Activated CD4-positive, alpha-beta T cell treated with anti-CD3 and anti-CD28 coated beads, Interleukin-2, amount 10 ng/mL, durations not matched to agents 24 days and 14 days (primary cell): ENCODE measurements at regions of chr1 and their contacts with region 1.

Region 1: GRCh38 chr1:207499573-207499972 is 3.6 kb downstream of the CR1 start:
- DNase-seq: peak; percentile 87
- H3K4me3 Mint-ChIP-seq: no peak overlapping the region
- H3K27ac Mint-ChIP-seq: peak overlapping the region; percentile 39
- H3K4me1 Mint-ChIP-seq: peaks cover 13% of the 10 kb centered on the region
- H3K27me3 Mint-ChIP-seq: peaks cover 52% of the 10 kb centered on the region

Region 2: DNA sequence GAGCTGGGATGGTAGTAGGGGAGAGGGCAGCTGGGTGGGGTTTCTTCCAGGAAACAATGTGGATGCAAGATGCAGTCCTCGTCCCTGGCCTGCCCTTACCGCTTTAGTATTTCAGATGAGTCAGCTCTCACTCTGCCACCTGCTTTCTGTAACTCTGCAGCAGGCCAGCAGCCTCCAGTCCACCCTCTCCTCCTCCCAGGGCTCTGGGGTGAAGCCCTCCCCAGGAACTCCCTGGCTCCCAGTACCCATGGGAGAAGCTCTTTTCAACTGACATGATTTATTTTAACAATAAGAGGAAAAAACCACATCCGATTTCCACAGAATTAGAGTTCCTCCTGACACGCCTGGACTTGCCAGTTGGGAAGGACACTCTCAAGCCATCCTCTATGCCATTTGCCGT is 673.2 kb before region 1 on chr1:
- intact Hi-C with region 1: no loop called
- DNase-seq: no peak
- H3K4me3 Mint-ChIP-seq: no peak overlapping the region
- H3K27ac Mint-ChIP-seq: no peak overlapping the region
- H3K4me1 Mint-ChIP-seq: peaks cover 34% of the 10 kb centered on the region
- H3K27me3 Mint-ChIP-seq: peaks cover 1% of the 10 kb centered on the region

Region 3: DNA sequence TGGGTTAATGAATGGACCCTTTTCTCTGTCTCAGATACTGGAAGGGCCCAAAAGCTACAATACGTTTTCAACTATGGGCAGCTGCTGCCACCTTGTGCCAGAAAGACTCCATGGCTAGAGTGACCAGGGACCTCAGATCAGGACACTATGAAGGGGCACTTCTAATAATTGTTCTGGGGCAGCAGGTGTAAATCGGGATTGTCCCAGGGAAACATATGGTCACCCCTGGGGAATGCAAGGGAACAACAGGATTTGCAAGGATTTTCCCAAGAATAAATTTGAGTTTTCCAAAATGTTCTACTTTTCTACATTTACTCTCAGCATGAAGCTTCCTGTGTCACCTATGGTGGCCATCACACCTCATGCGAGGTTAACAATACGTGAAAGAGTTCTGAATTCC is 517.4 kb before region 1 on chr1:
- intact Hi-C with region 1: loop called (anchors 5 kb)
- DNase-seq: peak; percentile 90
- H3K4me3 Mint-ChIP-seq: no peak overlapping the region
- H3K27ac Mint-ChIP-seq: no peak overlapping the region
- H3K4me1 Mint-ChIP-seq: no peaks in the 10 kb centered on the region
- H3K27me3 Mint-ChIP-seq: peaks cover 52% of the 10 kb centered on the region

Region 4: GRCh38 chr1:207084701-207085180 is 414.8 kb before region 1 on chr1:
- intact Hi-C with region 1: loop called (anchors 1 kb)
- DNase-seq: peak; percentile 89
- H3K4me3 Mint-ChIP-seq: no peak overlapping the region
- H3K27ac Mint-ChIP-seq: no peak overlapping the region
- H3K4me1 Mint-ChIP-seq: peaks cover 30% of the 10 kb centered on the region
- H3K27me3 Mint-ChIP-seq: peaks cover 24% of the 10 kb centered on the region

Region 5: GRCh38 chr1:207321079-207321789 is 178.3 kb before region 1 on chr1 and contains the start of gene CD55:
- intact Hi-C with region 1: loop called (anchors 1 kb)
- DNase-seq: peak; percentile 100
- H3K4me3 Mint-ChIP-seq: peak within 1 kb of the TSS; percentile 98
- H3K27ac Mint-ChIP-seq: peak within 1 kb of the TSS; percentile 100
- H3K4me1 Mint-ChIP-seq: peaks cover 35% of the 10 kb centered on the region
- H3K27me3 Mint-ChIP-seq: peaks cover 3% of the 10 kb centered on the region
- total RNA-seq, gene CD55: 133 and 142 TPM in 2 replicates

Region 6: GRCh38 chr1:207414606-207415108 is 84.9 kb before region 1 on chr1:
- intact Hi-C with region 1: loop called (anchors 2 kb)
- DNase-seq: peak; percentile 69
- H3K4me3 Mint-ChIP-seq: peak overlapping the region; percentile 12
- H3K27ac Mint-ChIP-seq: peak overlapping the region; percentile 45
- H3K4me1 Mint-ChIP-seq: peaks cover 26% of the 10 kb centered on the region
- H3K27me3 Mint-ChIP-seq: peaks cover 9% of the 10 kb centered on the region

Region 7: GRCh38 chr1:207474210-207474609 is 25.4 kb before region 1 on chr1:
- intact Hi-C with region 1: no loop called
- DNase-seq: no peak
- H3K4me3 Mint-ChIP-seq: no peak overlapping the region
- H3K27ac Mint-ChIP-seq: no peak overlapping the region
- H3K4me1 Mint-ChIP-seq: peaks cover 2% of the 10 kb centered on the region
- H3K27me3 Mint-ChIP-seq: peaks cover 6% of the 10 kb centered on the region